ENCODE measurements at regions of chr11 and their contacts with region 1.

Region 1: DNA sequence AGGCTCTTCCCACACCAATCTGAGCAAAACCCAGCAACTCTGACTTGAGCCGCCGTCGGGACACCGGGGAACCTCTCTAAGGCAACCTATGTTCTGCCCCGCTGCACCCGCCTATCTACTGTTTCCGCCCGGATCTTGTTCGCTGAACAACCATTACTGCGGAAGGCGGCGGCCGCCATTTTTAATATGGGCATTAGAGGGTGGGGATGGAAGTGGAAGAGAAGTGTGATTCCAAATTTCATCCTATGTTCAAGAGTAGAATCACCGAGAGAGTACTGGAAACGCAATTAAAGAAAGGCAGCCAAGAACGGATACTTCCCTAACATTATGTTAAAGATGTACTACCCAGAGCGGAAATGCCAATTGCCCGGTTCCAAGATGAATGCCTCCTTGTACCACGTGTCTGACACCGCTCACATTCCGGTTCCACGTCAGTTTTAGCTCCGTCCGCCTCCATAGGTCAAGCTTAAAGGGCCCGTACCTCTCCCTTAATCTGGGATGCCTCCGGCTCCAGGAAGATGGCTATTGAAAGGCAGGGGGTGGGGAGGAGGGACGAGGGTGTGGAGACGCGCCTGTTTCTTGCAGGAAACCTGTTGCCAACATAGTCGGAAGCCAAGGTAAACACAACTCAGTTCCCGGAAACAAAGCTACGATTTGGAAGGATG is at the start of gene DPAGT1:
- DNase-seq: peak; percentile 73 to 92 (median 78)
- ATAC-seq: peak; percentile 84
- H3K4me3 ChIP-seq: peak within 1 kb of the TSS; percentile 90
- H3K4me3 Mint-ChIP-seq: peak within 1 kb of the TSS; percentile 95
- H3K27ac ChIP-seq: peak within 1 kb of the TSS; percentile 83 to 95
- H3K27ac Mint-ChIP-seq: peak within 1 kb of the TSS; percentile 97
- H3K4me1 ChIP-seq: peaks cover 35% of the 10 kb centered on the region
- H3K4me1 Mint-ChIP-seq: peaks cover 51% of the 10 kb centered on the region
- H3K27me3 ChIP-seq: no peaks in the 10 kb centered on the region
- H3K27me3 Mint-ChIP-seq: no peaks in the 10 kb centered on the region
- CTCF ChIP-seq: no peak
- total RNA-seq, gene DPAGT1: 9.5 to 11.7 TPM

Region 2: GRCh38 chr11:119018074-119018938 is 83.6 kb before region 1 on chr11 and contains the starts of genes RPS25 and TRAPPC4:
- CTCF ChIA-PET with region 1: no interaction called
- POLR2A ChIA-PET with region 1: interaction called, 22 read pairs
- intact Hi-C with region 1: loop called (anchors 2 kb)
- DNase-seq: peak; percentile 92 to 99 (median 94)
- ATAC-seq: peak; percentile 83
- H3K4me3 ChIP-seq: peak within 1 kb of the TSS; percentile 63
- H3K4me3 Mint-ChIP-seq: peak within 1 kb of the TSS; percentile 100
- H3K27ac ChIP-seq: peak within 1 kb of the TSS; percentile 93
- H3K27ac Mint-ChIP-seq: peak within 1 kb of the TSS; percentile 99
- H3K4me1 ChIP-seq: peaks cover 58% of the 10 kb centered on the region
- H3K4me1 Mint-ChIP-seq: peaks cover 62% of the 10 kb centered on the region
- H3K27me3 ChIP-seq: no peaks in the 10 kb centered on the region
- H3K27me3 Mint-ChIP-seq: no peaks in the 10 kb centered on the region
- CTCF ChIP-seq: no peak
- total RNA-seq, gene RPS25: 2,261 to 2,296 TPM
- total RNA-seq, gene TRAPPC4: 101 to 106 TPM

Region 3: GRCh38 chr11:119115484-119116234 is 13.8 kb after region 1 on chr11:
- CTCF ChIA-PET with region 1: interaction called, 4 read pairs
- POLR2A ChIA-PET with region 1: interaction called, 59 read pairs
- intact Hi-C with region 1: no loop called
- DNase-seq: peak in 6 of 14 experiments; percentile 15 to 73 (median 56)
- ATAC-seq: peak; percentile 94
- H3K4me3 ChIP-seq: peak overlapping the region; percentile 48
- H3K4me3 Mint-ChIP-seq: peak overlapping the region; percentile 71
- H3K27ac ChIP-seq: peak overlapping the region; percentile 59 to 80
- H3K27ac Mint-ChIP-seq: peak overlapping the region; percentile 86
- H3K4me1 ChIP-seq: peaks cover 42% of the 10 kb centered on the region
- H3K4me1 Mint-ChIP-seq: peaks cover 30% of the 10 kb centered on the region
- H3K27me3 ChIP-seq: no peaks in the 10 kb centered on the region
- H3K27me3 Mint-ChIP-seq: no peaks in the 10 kb centered on the region
- CTCF ChIP-seq: no peak

Region 4: GRCh38 chr11:119168471-119169281 is 66.8 kb after region 1 on chr11 and contains the start of gene NLRX1:
- CTCF ChIA-PET with region 1: no interaction called
- POLR2A ChIA-PET with region 1: interaction called, 11 read pairs
- intact Hi-C with region 1: no loop called
- DNase-seq: peak; percentile 72 to 91 (median 78)
- ATAC-seq: peak; percentile 98
- H3K4me3 ChIP-seq: peak within 1 kb of the TSS; percentile 73
- H3K4me3 Mint-ChIP-seq: peak within 1 kb of the TSS; percentile 91
- H3K27ac ChIP-seq: peak within 1 kb of the TSS; percentile 36 to 56
- H3K27ac Mint-ChIP-seq: peak within 1 kb of the TSS; percentile 82
- H3K4me1 ChIP-seq: peaks cover 15% of the 10 kb centered on the region
- H3K4me1 Mint-ChIP-seq: peaks cover 6% of the 10 kb centered on the region
- H3K27me3 ChIP-seq: no peaks in the 10 kb centered on the region
- H3K27me3 Mint-ChIP-seq: no peaks in the 10 kb centered on the region
- CTCF ChIP-seq: peak; percentile 92
- total RNA-seq, gene NLRX1: 4.2 to 5.4 TPM

Measured in CD4-positive, alpha-beta T cell (primary cell).